Aorta (tissue), 5 donors: ENCODE measurements at regions of chr6 and their contacts with region 1.

Region 1: DNA sequence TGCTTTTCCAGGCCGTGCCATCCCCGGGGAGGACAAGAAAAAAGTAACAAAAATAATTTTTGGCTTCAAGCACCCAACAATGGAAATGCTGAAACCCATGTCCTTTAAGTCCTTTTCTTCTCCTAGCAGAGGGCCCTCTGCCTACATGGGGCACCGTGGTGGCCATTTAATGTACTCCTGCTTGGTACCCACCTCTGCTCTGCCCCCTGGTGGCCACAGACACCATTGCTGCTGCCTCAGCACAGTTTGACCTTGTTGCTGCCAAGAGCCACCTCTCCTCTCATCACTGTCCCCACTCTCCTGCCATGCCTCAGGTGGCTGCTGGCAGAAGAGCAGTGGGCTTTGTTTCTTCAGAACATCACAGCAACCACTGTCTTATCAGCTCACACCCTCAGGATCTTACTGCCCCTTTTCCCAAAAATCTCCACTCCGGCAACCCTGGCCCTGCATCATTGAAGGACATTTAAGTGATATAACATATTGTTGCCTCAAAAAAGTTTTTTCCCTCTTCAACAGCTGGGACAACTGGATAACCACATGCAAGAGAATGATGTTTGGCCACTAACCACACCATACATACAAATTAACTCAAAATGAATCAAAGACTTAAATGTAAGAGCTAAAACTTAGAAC is 12.9 kb upstream of the ARMC2 start:
- DNase-seq: peak; percentile 91 to 96
- ATAC-seq: peak; percentile 93
- H3K4me3 ChIP-seq: no peak overlapping the region
- H3K27ac ChIP-seq: peak overlapping the region in 1 of 2 donors; percentile 54
- H3K4me1 ChIP-seq: peaks cover 0 to 1% of the 10 kb centered on the region in 2 donors
- H3K27me3 ChIP-seq: no peaks in the 10 kb centered on the region

Region 2: DNA sequence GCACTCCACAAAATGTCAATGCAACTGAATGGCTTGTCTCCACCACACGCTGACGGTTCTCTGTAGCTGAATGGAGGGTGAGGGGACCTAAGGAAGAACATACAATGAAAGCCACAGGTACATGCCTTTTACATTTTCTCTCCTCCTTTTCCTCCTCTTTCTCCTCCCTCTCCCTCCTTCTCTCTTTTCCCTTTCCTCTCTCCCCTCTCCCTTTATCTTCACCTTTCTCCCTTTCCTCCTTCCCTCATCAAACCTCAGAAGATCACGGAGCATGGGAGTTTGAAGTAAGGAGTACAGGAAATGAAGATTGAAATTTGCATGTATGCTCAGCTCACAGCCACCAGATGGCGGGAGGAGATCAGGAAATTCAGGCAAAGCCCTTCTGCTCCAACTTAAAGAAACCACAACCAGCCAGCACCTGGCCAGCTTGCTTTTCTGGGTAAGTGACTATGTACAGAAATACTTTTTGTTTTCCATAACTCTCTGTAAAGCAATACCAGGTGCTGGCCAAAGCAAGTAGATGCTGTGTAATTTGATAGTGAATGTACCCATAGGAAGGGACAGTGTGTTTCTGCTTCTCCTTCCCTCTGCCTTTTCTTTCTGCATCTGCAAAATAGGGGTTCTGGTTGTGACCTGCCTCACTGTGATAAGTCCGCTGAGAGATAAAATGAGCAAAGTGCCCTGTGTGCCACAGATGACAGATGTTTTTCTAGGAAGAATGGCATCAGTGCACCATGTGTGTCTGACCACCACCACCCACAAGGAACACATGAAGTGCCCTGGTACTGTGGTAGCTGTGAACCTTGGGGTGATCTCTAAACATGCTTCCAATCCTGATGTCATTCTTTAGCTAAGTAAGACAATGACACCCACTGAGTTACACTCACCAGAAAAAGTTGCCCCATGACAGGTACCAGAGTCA is 293.2 kb before region 1 on chr6:
- intact Hi-C with region 1: loop called (anchors 2 to 5 kb)
- DNase-seq: peak in 1 of 2 donors; percentile 80
- ATAC-seq: peak; percentile 82
- H3K4me3 ChIP-seq: no peak overlapping the region
- H3K27ac ChIP-seq: no peak overlapping the region
- H3K4me1 ChIP-seq: no peaks in the 10 kb centered on the region
- H3K27me3 ChIP-seq: no peaks in the 10 kb centered on the region

Region 3: GRCh38 chr6:108782179-108783041 is 52.9 kb before region 1 on chr6:
- intact Hi-C with region 1: loop called in 1 of 2 experiments (anchors 5 kb)
- DNase-seq: peak; percentile 88 to 93
- ATAC-seq: peak; percentile 91
- H3K4me3 ChIP-seq: no peak overlapping the region
- H3K27ac ChIP-seq: no peak overlapping the region
- H3K4me1 ChIP-seq: no peaks in the 10 kb centered on the region
- H3K27me3 ChIP-seq: no peaks in the 10 kb centered on the region

Region 4: GRCh38 chr6:108793516-108794251 is 41.6 kb before region 1 on chr6:
- intact Hi-C with region 1: no loop called
- DNase-seq: no peak
- ATAC-seq: no peak
- H3K4me3 ChIP-seq: no peak overlapping the region
- H3K27ac ChIP-seq: no peak overlapping the region
- H3K4me1 ChIP-seq: no peaks in the 10 kb centered on the region
- H3K27me3 ChIP-seq: no peaks in the 10 kb centered on the region

Region 5: DNA sequence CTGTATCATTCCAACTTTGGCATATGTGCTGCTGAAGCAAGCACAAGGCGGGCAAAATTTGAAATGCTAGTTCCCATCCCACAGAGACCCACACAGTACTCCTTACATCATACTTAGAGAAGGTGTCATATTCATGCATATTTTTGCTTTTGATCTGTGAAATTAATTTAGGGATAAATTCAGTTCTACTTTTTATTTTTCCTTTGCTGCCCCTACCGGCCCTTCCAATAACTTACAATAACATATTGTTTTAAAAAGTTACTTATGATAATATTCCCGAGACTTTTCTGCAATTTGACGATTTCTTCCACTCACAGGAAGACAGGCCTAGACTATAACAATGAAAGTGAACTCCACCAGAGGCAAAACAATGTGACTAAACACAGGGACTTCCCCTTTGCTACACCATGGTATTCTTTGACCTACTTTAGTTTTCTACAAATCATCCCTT is 224.3 kb after region 1 on chr6:
- intact Hi-C with region 1: loop called in 1 of 2 experiments (anchors 5 kb)
- DNase-seq: no peak
- ATAC-seq: peak; percentile 61
- H3K4me3 ChIP-seq: no peak overlapping the region
- H3K27ac ChIP-seq: no peak overlapping the region
- H3K4me1 ChIP-seq: peaks cover 6 to 11% of the 10 kb centered on the region in 2 donors
- H3K27me3 ChIP-seq: no peaks in the 10 kb centered on the region